ENCODE measurements at regions of chr3 and their contacts with region 1.

Region 1: DNA sequence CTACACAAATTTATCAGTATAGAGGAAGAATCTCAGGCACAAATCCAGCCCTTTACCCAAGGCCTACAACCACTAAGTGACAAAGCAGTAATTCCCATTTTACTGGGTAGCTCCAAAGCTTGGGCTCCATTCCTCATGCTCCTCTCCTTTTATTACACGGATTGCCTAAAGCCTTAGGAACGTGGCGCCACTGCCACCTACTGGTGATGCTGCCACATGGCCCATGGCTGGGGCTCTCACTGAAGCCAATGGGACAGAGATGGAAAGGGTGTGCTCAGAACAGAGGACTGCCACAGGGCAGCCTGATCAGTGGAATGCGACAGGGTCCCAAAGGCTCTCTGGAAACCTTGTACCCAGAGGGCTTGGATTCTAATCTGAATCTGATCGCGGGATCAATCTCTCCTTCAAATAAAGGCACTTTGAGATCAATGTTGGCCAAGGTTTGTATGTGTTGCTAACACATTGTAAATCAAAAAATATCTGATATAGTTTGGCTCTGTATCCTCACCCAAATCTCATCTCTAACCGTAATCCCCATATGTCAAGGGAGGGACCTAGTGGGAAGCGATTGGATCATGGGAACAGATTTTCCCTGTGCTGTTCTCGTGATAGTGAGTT is 33.5 kb upstream of the LYZL4 start:
- DNase-seq: peak; percentile 80
- H3K27ac ChIP-seq: no peak overlapping the region
- CTCF ChIP-seq: peak; percentile 95

Region 2: DNA sequence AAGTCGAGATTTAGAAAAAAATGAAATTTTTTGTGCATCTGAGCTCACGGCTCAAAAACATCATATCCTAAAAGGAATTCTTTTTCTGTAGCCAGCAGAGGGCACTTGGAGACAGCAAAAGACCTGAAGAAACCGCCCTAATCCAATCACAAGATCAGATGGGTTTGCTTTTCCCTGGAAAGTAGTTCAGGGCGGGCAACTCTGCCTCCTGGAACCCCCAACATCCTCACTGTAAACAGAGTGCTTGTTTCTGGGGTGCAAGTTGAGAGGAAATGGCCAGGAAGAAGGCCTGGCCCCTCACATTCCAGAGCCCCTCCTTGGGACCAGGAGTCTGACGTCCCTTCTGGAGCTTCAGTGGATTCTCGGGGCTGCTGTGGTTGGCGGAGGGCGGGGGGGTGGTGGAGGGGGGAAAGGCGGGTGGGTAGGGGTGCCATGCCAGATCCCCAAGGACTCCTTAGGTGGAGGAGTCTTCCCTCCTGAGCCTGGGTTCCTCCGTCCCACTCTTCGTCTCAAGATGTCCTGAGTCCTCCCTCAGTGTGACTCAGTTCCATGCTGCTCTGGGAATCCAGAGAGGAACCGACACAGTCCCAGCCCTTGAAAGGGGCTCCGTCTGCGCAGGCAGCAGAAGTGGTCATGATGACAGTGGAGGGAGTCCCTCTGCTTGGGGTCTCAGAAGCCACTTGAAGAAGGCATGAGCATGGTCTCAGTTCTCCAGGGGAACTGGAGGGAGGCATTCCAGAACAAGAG is 213.8 kb before region 1 on chr3:
- CTCF ChIA-PET with region 1: interaction called, 11 read pairs
- POLR2A ChIA-PET with region 1: no interaction called
- DNase-seq: peak; percentile 49
- H3K27ac ChIP-seq: no peak overlapping the region
- CTCF ChIP-seq: peak; percentile 55

Region 3: GRCh38 chr3:42247576-42248027 is 196.3 kb before region 1 on chr3:
- CTCF ChIA-PET with region 1: interaction called, 12 read pairs
- POLR2A ChIA-PET with region 1: no interaction called
- DNase-seq: peak; percentile 45
- H3K27ac ChIP-seq: no peak overlapping the region
- CTCF ChIP-seq: peak; percentile 74